ENCODE measurements at regions of chr17 and their contacts with region 1.

Region 1: DNA sequence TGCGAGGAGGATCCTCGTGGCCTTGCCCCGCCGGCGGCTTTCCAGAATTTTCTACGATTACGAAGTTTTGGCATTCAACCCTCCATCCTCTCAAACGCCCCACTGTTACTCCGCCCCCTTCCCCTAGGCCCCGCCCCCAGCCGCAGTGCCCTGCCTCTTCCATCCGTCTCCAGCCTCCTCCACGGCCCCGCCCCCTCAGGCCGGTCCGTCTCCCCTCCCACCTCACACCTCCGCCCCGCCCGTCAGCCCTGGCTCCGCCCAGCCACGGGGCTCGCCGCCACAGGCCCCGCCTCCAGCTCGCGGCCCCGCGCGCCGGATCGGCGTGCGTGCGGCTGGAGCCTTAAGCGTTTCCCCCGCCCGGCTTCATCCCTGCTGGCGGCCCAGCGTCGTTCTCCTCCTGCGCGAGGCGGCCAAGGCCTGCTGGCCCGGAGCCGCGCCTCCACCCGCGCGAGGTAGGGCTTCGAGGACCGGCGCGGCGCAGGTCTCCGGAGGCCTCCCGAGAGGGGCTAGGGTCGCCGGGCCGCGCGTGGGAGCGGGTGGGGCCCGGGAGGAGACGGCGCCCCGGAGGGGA is at the starts of genes C17orf67 and DGKE:
- DNase-seq: peak; percentile 90 to 95 (median 94)
- H3K4me3 ChIP-seq: peak within 1 kb of the TSS; percentile 38 to 85 (median 57)
- H3K4me3 Mint-ChIP-seq: peak within 1 kb of the TSS; percentile 94
- H3K27ac ChIP-seq: peak within 1 kb of the TSS; percentile 3 to 70
- H3K27ac Mint-ChIP-seq: peak within 1 kb of the TSS; percentile 62 to 91 (median 77)
- H3K4me1 ChIP-seq: peaks cover 26 to 30% of the 10 kb centered on the region in 2 donors
- H3K4me1 Mint-ChIP-seq: peaks cover 22% of the 10 kb centered on the region
- H3K27me3 ChIP-seq: no peaks in the 10 kb centered on the region
- H3K27me3 Mint-ChIP-seq: peaks cover 2 to 9% (median 5%) of the 10 kb centered on the region in 3 donors
- CTCF ChIP-seq: no peak
- polyA plus RNA-seq, gene C17orf67: 0.56 to 0.57 (median 0.56) TPM
- polyA plus RNA-seq, gene DGKE: 1.1 to 3.0 (median 1.5) TPM

Region 2: GRCh38 chr17:56779898-56780733 is 53.8 kb before region 1 on chr17:
- intact Hi-C with region 1: no loop called
- DNase-seq: peak; percentile 75 to 83 (median 76)
- H3K4me3 ChIP-seq: peak overlapping the region in 1 of 3 experiments; percentile 57
- H3K4me3 Mint-ChIP-seq: peak overlapping the region; percentile 79 to 91
- H3K27ac ChIP-seq: no peak overlapping the region
- H3K27ac Mint-ChIP-seq: peak overlapping the region; percentile 30 to 80 (median 70)
- H3K4me1 ChIP-seq: peaks cover 18 to 22% of the 10 kb centered on the region in 2 donors
- H3K4me1 Mint-ChIP-seq: peaks cover 33% of the 10 kb centered on the region
- H3K27me3 ChIP-seq: peaks cover 0 to 22% of the 10 kb centered on the region in 2 donors
- H3K27me3 Mint-ChIP-seq: peaks cover 15 to 29% (median 24%) of the 10 kb centered on the region in 3 donors
- CTCF ChIP-seq: peak; percentile 98

Region 3: GRCh38 chr17:56913864-56914640 is 80.2 kb after region 1 on chr17 and contains the start of gene TRIM25:
- intact Hi-C with region 1: loop called in 1 of 2 experiments (anchors 5 kb)
- DNase-seq: peak; percentile 84 to 95 (median 94)
- H3K4me3 ChIP-seq: peak within 1 kb of the TSS; percentile 64 to 98 (median 87)
- H3K4me3 Mint-ChIP-seq: peak within 1 kb of the TSS; percentile 95 to 98
- H3K27ac ChIP-seq: peak within 1 kb of the TSS; percentile 98 to 99
- H3K27ac Mint-ChIP-seq: peak within 1 kb of the TSS; percentile 95 to 98 (median 96)
- H3K4me1 ChIP-seq: peaks cover 71 to 88% of the 10 kb centered on the region in 2 donors
- H3K4me1 Mint-ChIP-seq: peaks cover 73% of the 10 kb centered on the region
- H3K27me3 ChIP-seq: no peaks in the 10 kb centered on the region
- H3K27me3 Mint-ChIP-seq: no peaks in the 10 kb centered on the region
- CTCF ChIP-seq: no peak
- polyA plus RNA-seq, gene TRIM25: 5.4 to 98.3 (median 11.2) TPM

Region 4: GRCh38 chr17:56977673-56978395 is 143.9 kb after region 1 on chr17 and contains the start of gene SCPEP1:
- intact Hi-C with region 1: loop called in 1 of 2 experiments (anchors 5 kb)
- DNase-seq: peak; percentile 73 to 85 (median 73)
- H3K4me3 ChIP-seq: peak within 1 kb of the TSS; percentile 78 to 87 (median 84)
- H3K4me3 Mint-ChIP-seq: peak within 1 kb of the TSS; percentile 90 to 98
- H3K27ac ChIP-seq: peak within 1 kb of the TSS; percentile 72 to 84
- H3K27ac Mint-ChIP-seq: peak within 1 kb of the TSS; percentile 92 to 97 (median 95)
- H3K4me1 ChIP-seq: peaks cover 46 to 55% of the 10 kb centered on the region in 2 donors
- H3K4me1 Mint-ChIP-seq: peaks cover 48% of the 10 kb centered on the region
- H3K27me3 ChIP-seq: no peaks in the 10 kb centered on the region
- H3K27me3 Mint-ChIP-seq: peaks cover 0 to 2% (median 0%) of the 10 kb centered on the region in 3 donors
- CTCF ChIP-seq: no peak
- polyA plus RNA-seq, gene SCPEP1: 373 to 451 (median 426) TPM

Region 5: GRCh38 chr17:57004944-57005579 is 171.2 kb after region 1 on chr17:
- intact Hi-C with region 1: no loop called
- DNase-seq: peak; percentile 6 to 21 (median 19)
- H3K4me3 ChIP-seq: no peak overlapping the region
- H3K4me3 Mint-ChIP-seq: no peak overlapping the region
- H3K27ac ChIP-seq: peak overlapping the region in 1 of 2 donors; percentile 36
- H3K27ac Mint-ChIP-seq: peak overlapping the region in 6 of 7 donors; percentile 1 to 76 (median 30)
- H3K4me1 ChIP-seq: peaks cover 24 to 30% of the 10 kb centered on the region in 2 donors
- H3K4me1 Mint-ChIP-seq: peaks cover 34% of the 10 kb centered on the region
- H3K27me3 ChIP-seq: no peaks in the 10 kb centered on the region
- H3K27me3 Mint-ChIP-seq: peaks cover 0 to 1% (median 0%) of the 10 kb centered on the region in 3 donors
- CTCF ChIP-seq: no peak

Region 6: DNA sequence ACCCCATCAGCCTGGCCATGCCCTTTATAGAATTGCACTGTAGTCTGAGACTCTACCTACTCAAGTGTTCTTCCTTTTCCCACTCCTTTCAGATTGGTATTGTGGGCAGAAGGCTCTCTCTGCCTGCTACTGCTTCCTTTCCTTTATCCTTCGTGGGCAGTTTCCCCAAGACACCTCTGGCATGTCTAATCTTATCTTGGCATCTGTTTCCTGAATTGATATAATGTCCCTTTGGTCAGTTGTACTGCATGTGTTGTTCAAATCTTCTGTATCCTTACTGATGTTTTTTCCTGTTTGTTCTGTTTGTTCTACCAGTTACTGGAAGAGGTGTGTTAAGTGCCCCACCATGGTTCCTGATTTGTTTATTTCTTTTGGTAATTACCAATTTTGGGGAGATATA is 392.9 kb after region 1 on chr17:
- intact Hi-C with region 1: no loop called
- DNase-seq: no peak
- H3K4me3 ChIP-seq: no peak overlapping the region
- H3K4me3 Mint-ChIP-seq: no peak overlapping the region
- H3K27ac ChIP-seq: no peak overlapping the region
- H3K27ac Mint-ChIP-seq: no peak overlapping the region
- H3K4me1 ChIP-seq: no peaks in the 10 kb centered on the region
- H3K4me1 Mint-ChIP-seq: no peaks in the 10 kb centered on the region
- H3K27me3 ChIP-seq: no peaks in the 10 kb centered on the region
- H3K27me3 Mint-ChIP-seq: peaks cover 2 to 9% (median 4%) of the 10 kb centered on the region in 3 donors
- CTCF ChIP-seq: no peak